ENCODE measurements at regions of chr4 and their contacts with region 1.

Region 1: GRCh38 chr4:102610007-102610406 is 108.8 kb downstream of the NFKB1 start:
- DNase-seq: no peak
- ATAC-seq: no peak
- H3K4me3 ChIP-seq: no peak overlapping the region
- H3K4me3 Mint-ChIP-seq: no peak overlapping the region
- H3K27ac ChIP-seq: no peak overlapping the region
- H3K27ac Mint-ChIP-seq: no peak overlapping the region
- H3K4me1 ChIP-seq: peaks cover 42% of the 10 kb centered on the region
- H3K4me1 Mint-ChIP-seq: peaks cover 74% of the 10 kb centered on the region
- H3K27me3 ChIP-seq: no peaks in the 10 kb centered on the region
- H3K27me3 Mint-ChIP-seq: no peaks in the 10 kb centered on the region
- CTCF ChIP-seq: no peak

Region 2: GRCh38 chr4:102094481-102094880 is 515.5 kb before region 1 on chr4:
- CTCF ChIA-PET with region 1: no interaction called
- POLR2A ChIA-PET with region 1: no interaction called
- intact Hi-C with region 1: no loop called
- DNase-seq: no peak
- ATAC-seq: no peak
- H3K4me3 ChIP-seq: no peak overlapping the region
- H3K4me3 Mint-ChIP-seq: no peak overlapping the region
- H3K27ac ChIP-seq: no peak overlapping the region
- H3K27ac Mint-ChIP-seq: no peak overlapping the region
- H3K4me1 ChIP-seq: no peaks in the 10 kb centered on the region
- H3K4me1 Mint-ChIP-seq: no peaks in the 10 kb centered on the region
- H3K27me3 ChIP-seq: no peaks in the 10 kb centered on the region
- H3K27me3 Mint-ChIP-seq: peaks cover 3% of the 10 kb centered on the region
- CTCF ChIP-seq: no peak

Region 3: DNA sequence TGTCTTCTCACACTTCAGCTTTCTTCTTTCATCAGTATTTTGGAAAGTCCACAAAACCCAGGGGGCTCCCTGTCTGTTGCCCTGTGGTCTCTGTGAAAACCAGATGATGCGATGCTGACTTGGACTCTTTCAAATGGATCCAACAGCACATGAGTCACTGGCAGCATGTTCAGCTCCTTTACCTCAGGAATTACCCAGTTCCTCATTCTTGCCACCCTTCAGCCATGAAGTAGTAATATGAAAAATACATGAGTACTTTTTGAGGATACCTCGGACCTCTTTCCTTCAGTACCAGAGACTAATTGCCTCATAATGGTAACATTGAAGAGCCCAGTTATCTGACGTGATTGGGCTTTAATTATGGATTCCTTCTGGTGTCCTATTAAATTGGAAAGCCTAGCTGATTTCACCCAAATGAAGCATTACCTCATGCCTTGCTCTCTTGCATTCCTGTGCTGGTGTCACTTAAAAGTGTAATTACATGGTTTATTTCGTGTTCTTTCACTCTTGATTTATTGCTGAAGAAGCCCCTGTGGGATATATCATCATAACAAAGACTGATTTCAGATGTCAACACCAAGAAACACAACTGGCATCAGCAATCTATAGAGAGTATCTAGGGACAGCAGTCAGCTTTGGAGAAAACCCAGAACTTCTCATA is 45.5 kb before region 1 on chr4:
- CTCF ChIA-PET with region 1: no interaction called
- POLR2A ChIA-PET with region 1: interaction called, 3 read pairs
- intact Hi-C with region 1: loop called in 1 of 2 experiments (anchors 5 kb)
- DNase-seq: peak in 2 of 14 experiments; percentile 67 to 76
- ATAC-seq: no peak
- H3K4me3 ChIP-seq: no peak overlapping the region
- H3K4me3 Mint-ChIP-seq: no peak overlapping the region
- H3K27ac ChIP-seq: no peak overlapping the region
- H3K27ac Mint-ChIP-seq: peak overlapping the region; percentile 40
- H3K4me1 ChIP-seq: peaks cover 20% of the 10 kb centered on the region
- H3K4me1 Mint-ChIP-seq: peaks cover 52% of the 10 kb centered on the region
- H3K27me3 ChIP-seq: no peaks in the 10 kb centered on the region
- H3K27me3 Mint-ChIP-seq: no peaks in the 10 kb centered on the region
- CTCF ChIP-seq: no peak

Region 4: GRCh38 chr4:102632241-102633065 is 22.4 kb after region 1 on chr4:
- CTCF ChIA-PET with region 1: interaction called, 4 read pairs
- POLR2A ChIA-PET with region 1: interaction called, 14 read pairs
- intact Hi-C with region 1: no loop called
- DNase-seq: no peak
- ATAC-seq: no peak
- H3K4me3 ChIP-seq: no peak overlapping the region
- H3K4me3 Mint-ChIP-seq: no peak overlapping the region
- H3K27ac ChIP-seq: no peak overlapping the region
- H3K27ac Mint-ChIP-seq: peak overlapping the region; percentile 94
- H3K4me1 ChIP-seq: peaks cover 20% of the 10 kb centered on the region
- H3K4me1 Mint-ChIP-seq: peaks cover 53% of the 10 kb centered on the region
- H3K27me3 ChIP-seq: no peaks in the 10 kb centered on the region
- H3K27me3 Mint-ChIP-seq: no peaks in the 10 kb centered on the region
- CTCF ChIP-seq: no peak